ENCODE measurements at regions of chr13 and their contacts with region 1.

Region 1: DNA sequence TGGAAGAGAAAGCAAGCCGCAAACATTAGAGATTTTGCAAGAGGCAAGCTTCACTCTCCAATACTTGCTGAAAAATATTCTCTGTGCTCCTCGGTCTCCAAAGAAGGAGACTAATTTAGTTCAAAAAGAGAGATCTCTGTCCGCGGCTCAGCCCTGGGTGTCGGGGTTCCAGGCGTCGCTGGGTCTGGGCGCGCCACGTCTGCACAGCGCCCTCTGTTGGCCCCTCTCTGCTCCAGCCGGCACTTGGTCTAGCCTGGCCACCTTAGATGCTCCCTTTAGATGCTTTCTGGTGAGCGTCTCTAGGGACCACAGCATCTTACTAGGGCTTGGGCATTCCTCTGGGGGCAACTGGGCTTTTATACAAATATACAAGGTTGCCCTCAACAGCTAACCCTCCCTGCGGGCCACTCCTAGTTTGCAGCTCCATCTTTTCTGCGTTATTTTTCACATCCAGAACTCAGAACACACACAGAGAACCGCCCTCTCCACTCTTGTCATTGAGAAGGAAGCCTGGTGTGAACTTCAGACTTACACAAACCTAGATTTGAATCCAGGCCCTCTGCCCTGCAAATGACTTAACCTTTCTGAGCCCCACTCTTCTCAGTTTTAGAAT is 78.3 kb downstream of the CYSLTR2 start:
- DNase-seq: peak; percentile 80
- ATAC-seq: peak; percentile 81
- H3K4me3 Mint-ChIP-seq: peak overlapping the region; percentile 37
- H3K27ac Mint-ChIP-seq: no peak overlapping the region
- H3K4me1 Mint-ChIP-seq: peaks cover 14% of the 10 kb centered on the region
- H3K27me3 Mint-ChIP-seq: no peaks in the 10 kb centered on the region

Region 2: DNA sequence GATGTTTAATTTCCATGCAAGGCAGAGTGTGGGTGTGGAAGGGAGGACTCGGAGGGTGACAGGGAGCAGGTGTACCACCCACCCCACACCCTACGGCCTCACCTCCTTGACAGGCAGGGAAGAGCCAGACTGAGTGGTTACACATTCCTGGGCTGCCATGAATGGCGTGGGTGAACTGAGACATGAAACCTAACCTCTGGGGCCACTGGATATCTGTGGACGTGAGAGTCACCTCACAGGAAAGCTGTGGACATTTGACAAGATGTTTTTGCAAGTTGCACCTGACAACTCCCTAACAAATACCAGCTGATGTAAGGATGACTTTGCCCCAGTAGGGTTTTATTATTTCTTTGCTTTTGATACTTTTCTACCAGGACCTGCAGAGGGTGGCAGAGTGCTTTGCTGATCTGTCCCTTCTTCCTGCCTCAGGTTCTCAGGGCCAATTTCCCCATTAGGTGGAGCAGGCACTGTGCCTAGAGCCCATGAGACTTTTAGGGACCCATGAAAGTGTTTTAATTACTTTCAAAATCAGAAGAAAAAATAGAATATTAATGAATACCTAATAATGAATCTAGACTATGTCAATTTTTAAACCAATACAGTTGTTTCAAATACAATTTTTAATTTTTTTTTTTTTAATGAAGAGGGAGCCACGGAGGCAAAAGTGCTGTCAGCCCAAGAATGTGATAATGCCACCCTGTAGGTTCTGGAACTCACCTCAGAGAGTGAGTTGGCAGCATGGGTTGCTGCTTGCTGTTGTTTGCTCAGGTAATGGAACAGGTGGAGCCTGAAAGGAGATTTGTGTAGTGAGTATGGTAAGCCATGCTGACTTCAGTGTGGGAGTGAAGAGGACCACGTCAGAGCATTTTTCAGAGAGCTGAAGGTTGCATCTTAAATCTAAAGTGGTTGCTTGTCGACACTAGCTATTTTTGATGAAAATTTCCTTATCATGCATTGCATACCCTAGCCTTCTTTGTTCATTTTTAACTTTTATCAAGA is 136.3 kb before region 1 on chr13:
- CTCF ChIA-PET with region 1: interaction called, 7 read pairs
- POLR2A ChIA-PET with region 1: no interaction called
- intact Hi-C with region 1: loop called (anchors 1 to 10 kb)
- DNase-seq: peak; percentile 71
- ATAC-seq: peak; percentile 87
- H3K4me3 Mint-ChIP-seq: no peak overlapping the region
- H3K27ac Mint-ChIP-seq: no peak overlapping the region
- H3K4me1 Mint-ChIP-seq: peaks cover 6% of the 10 kb centered on the region
- H3K27me3 Mint-ChIP-seq: peaks cover 3% of the 10 kb centered on the region

Region 3: GRCh38 chr13:48653472-48653939 is 78.6 kb before region 1 on chr13 and contains the start of gene CYSLTR2:
- CTCF ChIA-PET with region 1: interaction called, 5 read pairs
- POLR2A ChIA-PET with region 1: no interaction called
- intact Hi-C with region 1: loop called (anchors 1 to 2 kb)
- DNase-seq: no peak
- ATAC-seq: peak; percentile 88
- H3K4me3 Mint-ChIP-seq: peak within 1 kb of the TSS; percentile 60
- H3K27ac Mint-ChIP-seq: peak within 1 kb of the TSS; percentile 90
- H3K4me1 Mint-ChIP-seq: peaks cover 44% of the 10 kb centered on the region
- H3K27me3 Mint-ChIP-seq: no peaks in the 10 kb centered on the region
- total RNA-seq, gene CYSLTR2: 2.2 to 2.5 TPM

Measured in activated CD4-positive, alpha-beta T cell treated with anti-CD3 and anti-CD28 coated beads for 36 hours (primary cell).